Endothelial cell of umbilical vein (primary cell): ENCODE measurements at regions of chr11 and their contacts with region 1.

Region 1: DNA sequence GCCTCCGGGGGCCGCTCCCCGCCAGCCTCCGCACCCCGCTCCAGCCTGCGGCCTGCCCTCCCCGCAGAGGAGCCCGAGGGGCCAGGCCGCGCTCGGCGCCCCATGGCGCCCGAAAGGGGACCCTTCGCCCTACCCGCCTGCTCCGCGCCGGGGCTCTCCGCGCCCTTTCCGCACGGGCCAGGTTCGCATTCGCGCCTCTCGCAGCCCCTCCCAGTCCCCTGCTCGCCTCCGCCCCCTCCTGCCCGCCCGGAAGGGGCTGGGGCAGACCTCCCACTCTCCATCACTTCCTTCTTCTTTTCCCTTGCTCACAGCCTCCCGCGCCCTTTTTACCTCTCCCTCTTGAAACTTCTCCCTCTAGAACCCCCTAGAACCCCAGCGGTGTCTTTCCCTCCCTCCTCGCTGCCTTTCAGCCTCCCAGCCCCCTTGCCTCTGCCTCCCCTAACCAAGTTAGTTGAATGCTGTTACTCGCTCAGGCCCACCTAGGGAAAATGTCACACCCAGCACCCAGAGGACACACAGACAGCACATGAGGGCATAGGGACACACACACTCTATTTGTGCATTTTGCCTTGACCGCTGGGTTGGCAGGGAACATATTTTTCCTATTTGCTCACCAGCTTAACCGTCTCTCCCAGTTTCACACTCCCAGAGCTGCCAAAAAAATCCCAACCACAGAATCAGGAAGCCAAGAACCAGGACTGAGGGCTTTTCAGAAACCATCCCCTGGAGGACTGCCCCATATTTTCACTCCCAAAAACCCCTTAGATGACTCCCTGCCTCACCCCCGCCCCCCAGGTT is at the start of gene SLC43A3:
- DNase-seq: peak; percentile 38
- H3K4me3 ChIP-seq: peak within 1 kb of the TSS; percentile 47 to 68 (median 59)
- H3K27ac ChIP-seq: peak within 1 kb of the TSS; percentile 81
- H3K4me1 ChIP-seq: peaks cover 33% of the 10 kb centered on the region
- H3K27me3 ChIP-seq: peaks cover 4 to 5% of the 10 kb centered on the region in 2 experiments
- CTCF ChIP-seq: no peak
- POLR2A ChIP-seq: peak; percentile 80
- total RNA-seq, gene SLC43A3: 68.9 and 89.4 TPM in 2 replicates

Region 2: GRCh38 chr11:57269571-57270021 is 157.5 kb before region 1 on chr11:
- CTCF ChIA-PET with region 1: no interaction called
- POLR2A ChIA-PET with region 1: no interaction called
- dilution Hi-C with region 1: no loop called
- intact Hi-C with region 1: no loop called
- DNase-seq: peak; percentile 74
- H3K4me3 ChIP-seq: no peak overlapping the region
- H3K27ac ChIP-seq: no peak overlapping the region
- H3K4me1 ChIP-seq: no peaks in the 10 kb centered on the region
- H3K27me3 ChIP-seq: no peaks in the 10 kb centered on the region
- CTCF ChIP-seq: no peak
- POLR2A ChIP-seq: no peak

Region 3: DNA sequence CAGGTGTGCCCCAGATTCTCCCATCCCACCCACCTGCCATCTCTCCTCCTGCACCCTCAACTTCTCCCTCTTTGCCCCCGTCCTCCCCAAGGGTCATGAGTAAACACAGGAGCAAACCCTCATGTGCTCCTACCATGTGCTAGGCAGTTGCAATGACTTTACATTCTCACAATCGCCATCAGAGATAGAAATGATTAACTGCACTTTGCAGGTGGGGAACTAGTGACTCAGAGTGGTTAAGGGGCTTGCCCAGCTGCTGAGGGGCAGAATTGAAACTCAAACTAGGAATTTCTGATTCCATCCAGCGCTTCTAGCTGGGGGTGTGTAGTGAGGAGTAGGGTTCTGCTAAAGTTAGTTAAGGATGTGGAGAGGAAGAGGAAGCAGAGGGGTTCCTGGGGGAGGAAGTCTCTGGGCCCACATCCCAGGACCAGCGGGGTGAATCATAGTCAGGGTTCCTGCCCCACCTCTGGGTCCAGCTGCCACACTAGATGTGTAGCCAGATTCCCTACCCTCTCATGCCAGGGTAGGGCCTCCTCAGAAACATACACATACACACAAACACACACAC is 20.7 kb before region 1 on chr11:
- CTCF ChIA-PET with region 1: interaction called, 9 read pairs
- POLR2A ChIA-PET with region 1: interaction called, 7 read pairs
- dilution Hi-C with region 1: no loop called
- intact Hi-C with region 1: loop called (anchors 1 kb)
- DNase-seq: peak; percentile 90
- H3K4me3 ChIP-seq: no peak overlapping the region
- H3K27ac ChIP-seq: peak overlapping the region; percentile 84
- H3K4me1 ChIP-seq: peaks cover 26% of the 10 kb centered on the region
- H3K27me3 ChIP-seq: no peaks in the 10 kb centered on the region
- CTCF ChIP-seq: no peak
- POLR2A ChIP-seq: peak; percentile 28

Region 4: DNA sequence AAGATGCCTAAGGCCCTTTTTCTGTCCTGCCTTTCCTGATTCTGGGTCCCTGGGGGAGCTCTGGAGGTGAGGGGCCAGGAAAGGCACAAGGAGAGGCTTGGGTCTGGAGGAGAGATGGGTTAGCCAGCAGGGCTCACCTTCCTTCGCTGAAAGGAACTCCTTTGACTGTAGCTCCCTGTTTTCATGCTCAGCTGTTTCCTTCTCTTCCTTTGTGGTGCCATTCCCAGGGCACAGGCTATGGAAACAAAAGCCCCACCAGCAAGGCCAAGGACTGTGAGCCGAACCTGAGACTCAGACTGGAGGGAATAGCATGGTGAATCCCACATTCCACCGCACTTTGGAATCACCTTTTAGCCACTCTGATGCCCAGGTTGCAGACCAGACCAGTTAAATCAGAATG is 10.7 kb before region 1 on chr11:
- CTCF ChIA-PET with region 1: interaction called, 8 read pairs
- POLR2A ChIA-PET with region 1: interaction called, 3 read pairs
- dilution Hi-C with region 1: no loop called
- intact Hi-C with region 1: loop called (anchors 1 kb)
- DNase-seq: peak; percentile 80
- H3K4me3 ChIP-seq: no peak overlapping the region
- H3K27ac ChIP-seq: peak overlapping the region; percentile 14
- H3K4me1 ChIP-seq: peaks cover 32% of the 10 kb centered on the region
- H3K27me3 ChIP-seq: no peaks in the 10 kb centered on the region
- CTCF ChIP-seq: no peak
- POLR2A ChIP-seq: no peak

Region 5: GRCh38 chr11:57480409-57481137 is 53.4 kb after region 1 on chr11:
- CTCF ChIA-PET with region 1: interaction called, 4 read pairs
- POLR2A ChIA-PET with region 1: no interaction called
- dilution Hi-C with region 1: no loop called
- intact Hi-C with region 1: loop called (anchors 1 kb)
- DNase-seq: peak; percentile 46
- H3K4me3 ChIP-seq: no peak overlapping the region
- H3K27ac ChIP-seq: no peak overlapping the region
- H3K4me1 ChIP-seq: peaks cover 9% of the 10 kb centered on the region
- H3K27me3 ChIP-seq: peaks cover 7 to 28% of the 10 kb centered on the region in 2 experiments
- CTCF ChIP-seq: peak; percentile 75 to 85
- POLR2A ChIP-seq: no peak

Region 6: DNA sequence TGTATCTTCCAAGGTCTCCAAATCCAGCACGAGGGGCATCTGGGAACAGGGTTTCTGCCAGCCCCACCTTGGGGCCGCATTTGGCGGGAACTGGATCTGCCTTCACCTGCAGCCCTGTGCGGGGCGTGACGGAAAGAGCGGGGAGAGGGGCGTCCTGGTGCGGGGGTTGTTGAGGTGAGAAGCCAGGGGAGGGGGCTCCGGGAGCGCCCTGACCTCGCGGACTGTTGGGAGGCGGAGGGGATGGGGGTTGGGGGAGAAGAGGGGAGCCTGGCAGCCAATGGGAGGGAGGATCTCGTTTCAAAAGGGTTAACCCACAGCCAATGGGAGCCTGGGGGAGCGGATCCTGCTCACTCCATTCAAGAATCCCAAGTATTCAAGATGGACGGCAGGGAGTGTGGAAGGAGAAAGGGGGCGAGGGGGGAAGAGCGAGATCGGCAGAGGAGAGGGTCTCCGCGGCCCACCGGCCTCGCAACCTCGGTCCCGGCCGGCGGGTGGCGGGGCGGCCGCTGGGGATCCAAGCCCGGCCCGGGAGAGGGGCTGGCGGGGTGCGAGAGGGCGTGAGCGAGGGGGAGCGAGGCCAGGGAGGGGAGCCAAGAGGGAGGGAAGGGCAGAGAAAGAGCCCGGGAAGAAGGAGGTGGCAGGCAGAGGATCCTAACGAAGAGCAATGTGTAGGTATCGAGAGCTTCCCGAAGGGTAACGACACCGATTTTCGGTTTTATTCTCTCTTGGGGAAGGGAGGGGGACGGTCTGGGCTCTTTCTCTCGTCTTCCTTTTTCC is 211.1 kb after region 1 on chr11:
- CTCF ChIA-PET with region 1: interaction called, 3 read pairs
- POLR2A ChIA-PET with region 1: no interaction called
- dilution Hi-C with region 1: no loop called
- intact Hi-C with region 1: loop called (anchors 2 kb)
- DNase-seq: peak; percentile 80
- H3K4me3 ChIP-seq: peak overlapping the region; percentile 55 to 87 (median 74)
- H3K27ac ChIP-seq: peak overlapping the region; percentile 81
- H3K4me1 ChIP-seq: peaks cover 24% of the 10 kb centered on the region
- H3K27me3 ChIP-seq: peaks cover 2 to 7% of the 10 kb centered on the region in 2 experiments
- CTCF ChIP-seq: no peak
- POLR2A ChIP-seq: peak; percentile 82